CD8-positive, alpha-beta T cell (primary cell): ENCODE measurements at regions of chr12 and their contacts with region 1.

Region 1: DNA sequence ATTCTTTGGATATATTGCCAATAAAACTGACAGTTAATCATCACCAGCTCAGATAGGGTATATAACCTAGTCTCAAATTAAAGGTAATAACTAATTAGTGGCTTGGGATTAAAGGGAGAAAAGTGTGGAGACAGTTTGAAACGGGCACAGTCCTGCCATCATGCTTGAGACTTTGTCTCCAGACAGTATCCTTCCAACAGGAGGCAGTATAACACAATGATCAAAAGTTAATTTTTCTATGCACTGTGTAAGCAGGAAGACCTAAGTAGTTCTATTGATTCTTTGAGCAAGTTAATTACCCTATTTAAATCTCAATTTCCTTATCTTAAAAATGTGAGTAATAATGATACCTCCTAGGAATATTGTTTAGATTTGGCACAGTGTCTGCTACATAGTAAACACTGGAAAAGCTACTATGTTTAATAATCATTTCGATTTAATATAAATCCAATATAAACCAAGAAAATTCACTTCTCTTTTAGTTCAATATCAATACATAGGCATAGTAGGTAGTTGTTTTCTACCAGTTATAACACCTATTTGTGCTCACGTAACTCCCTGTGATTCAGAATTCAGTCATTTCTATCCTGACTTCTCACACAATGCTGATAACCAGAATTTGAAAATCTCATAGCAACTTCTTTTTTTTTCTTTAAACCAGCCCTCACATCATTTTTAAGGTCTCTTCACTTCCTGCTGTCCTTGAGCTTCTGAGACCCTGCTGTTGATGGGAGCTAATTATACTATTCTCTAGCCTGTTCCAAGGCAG is 53.7 kb downstream of the GALNT4 start:
- DNase-seq: peak in 2 of 9 experiments; percentile 62 to 73
- ATAC-seq: peak; percentile 71
- H3K4me3 ChIP-seq: no peak overlapping the region
- H3K4me3 Mint-ChIP-seq: no peak overlapping the region
- H3K27ac ChIP-seq: peak overlapping the region in 1 of 2 experiments; percentile 30
- H3K27ac Mint-ChIP-seq: peak overlapping the region; percentile 67
- H3K4me1 ChIP-seq: peaks cover 30% of the 10 kb centered on the region
- H3K4me1 Mint-ChIP-seq: peaks cover 55% of the 10 kb centered on the region
- H3K27me3 ChIP-seq: no peaks in the 10 kb centered on the region
- H3K27me3 Mint-ChIP-seq: no peaks in the 10 kb centered on the region
- CTCF ChIP-seq: peak; percentile 70

Region 2: DNA sequence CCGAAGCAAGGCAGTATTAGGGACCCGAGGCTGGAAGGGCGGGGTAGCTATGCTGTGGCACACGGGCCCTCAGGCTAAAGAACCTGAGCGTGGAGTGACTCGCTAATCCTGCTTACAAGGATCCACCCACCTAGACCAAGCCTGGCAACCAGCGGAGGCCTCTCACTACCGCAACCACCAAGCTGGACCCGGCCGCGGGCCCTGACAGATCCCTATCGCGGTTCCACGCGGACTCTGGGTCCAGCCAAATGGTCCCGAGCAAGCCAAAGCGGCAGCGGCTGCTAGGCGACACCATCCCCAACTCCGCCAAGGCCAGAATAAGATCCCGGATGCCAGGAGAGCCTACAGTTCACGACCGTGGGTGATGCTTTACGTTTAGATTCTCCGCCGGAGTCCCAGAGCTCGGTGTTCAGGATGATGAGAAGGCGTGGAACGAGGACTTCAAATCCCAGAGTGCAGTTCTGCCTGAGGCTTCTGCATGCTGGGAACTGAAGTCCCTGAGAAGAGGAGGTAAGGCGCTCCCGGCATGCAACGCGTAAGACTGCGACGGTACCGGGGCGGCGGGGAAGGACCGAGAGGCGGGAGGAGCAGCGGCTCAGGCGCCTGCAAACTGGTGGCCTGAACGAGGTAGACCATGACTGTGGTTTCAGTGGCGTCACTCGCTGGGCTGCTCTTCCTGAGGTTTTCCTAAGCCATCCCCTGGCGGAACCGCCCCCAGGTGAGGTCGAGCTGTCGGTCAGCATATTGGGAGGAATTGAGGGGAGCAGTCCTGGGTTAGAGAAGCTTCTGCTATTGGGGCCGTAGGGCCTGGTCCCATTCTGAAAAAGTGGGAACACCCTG is 1328.9 kb before region 1 on chr12 and contains the starts of genes CEP290 and TMTC3:
- CTCF ChIA-PET with region 1: no interaction called
- POLR2A ChIA-PET with region 1: no interaction called
- intact Hi-C with region 1: loop called (anchors 5 to 10 kb)
- DNase-seq: peak; percentile 81 to 99 (median 90)
- ATAC-seq: peak; percentile 92
- H3K4me3 ChIP-seq: peak within 1 kb of the TSS; percentile 82 to 84
- H3K4me3 Mint-ChIP-seq: peak within 1 kb of the TSS; percentile 99
- H3K27ac ChIP-seq: peak within 1 kb of the TSS; percentile 75 to 85
- H3K27ac Mint-ChIP-seq: peak within 1 kb of the TSS; percentile 97
- H3K4me1 ChIP-seq: peaks cover 18% of the 10 kb centered on the region
- H3K4me1 Mint-ChIP-seq: peaks cover 48% of the 10 kb centered on the region
- H3K27me3 ChIP-seq: no peaks in the 10 kb centered on the region
- H3K27me3 Mint-ChIP-seq: no peaks in the 10 kb centered on the region
- CTCF ChIP-seq: no peak
- total RNA-seq, gene CEP290: 7.7 to 10.7 TPM
- total RNA-seq, gene TMTC3: 3.9 to 4.4 TPM

Region 3: DNA sequence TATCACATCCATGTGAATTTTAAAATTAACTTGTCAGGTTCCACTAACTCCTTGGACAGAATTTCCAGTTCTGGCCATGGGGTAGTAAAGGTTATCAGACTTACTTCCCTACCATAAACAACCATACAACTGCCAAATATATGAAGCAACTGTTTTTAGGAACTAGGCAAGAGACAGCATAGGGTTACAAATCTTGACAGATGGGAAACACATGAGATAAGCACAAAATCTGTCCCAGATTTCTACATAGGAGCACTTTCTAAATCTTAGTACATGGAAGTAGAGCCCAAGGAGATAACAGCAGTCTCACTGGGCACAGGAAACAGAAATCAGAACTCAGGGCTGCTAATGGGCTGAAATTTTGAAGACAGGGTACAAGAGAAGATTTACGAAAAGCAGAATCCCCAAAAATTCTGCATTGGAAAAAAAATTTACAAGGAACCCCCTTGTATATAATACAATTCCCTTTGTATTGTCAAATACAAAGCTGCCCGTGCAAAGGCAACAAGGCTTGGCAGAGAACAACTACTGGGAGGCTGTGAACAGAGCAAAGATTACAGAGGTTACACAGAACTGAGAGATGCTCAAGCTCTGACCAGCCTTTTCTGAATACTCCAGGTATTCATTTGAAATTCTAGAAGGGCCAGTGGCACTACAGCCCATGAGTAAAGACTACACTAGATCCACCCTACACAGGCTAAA is 10.4 kb after region 1 on chr12:
- CTCF ChIA-PET with region 1: interaction called, 8 read pairs
- POLR2A ChIA-PET with region 1: interaction called, 3 read pairs
- intact Hi-C with region 1: loop called in 1 of 2 experiments (anchors 2 kb)
- DNase-seq: no peak
- ATAC-seq: no peak
- H3K4me3 ChIP-seq: no peak overlapping the region
- H3K4me3 Mint-ChIP-seq: no peak overlapping the region
- H3K27ac ChIP-seq: no peak overlapping the region
- H3K27ac Mint-ChIP-seq: no peak overlapping the region
- H3K4me1 ChIP-seq: no peaks in the 10 kb centered on the region
- H3K4me1 Mint-ChIP-seq: peaks cover 10% of the 10 kb centered on the region
- H3K27me3 ChIP-seq: no peaks in the 10 kb centered on the region
- H3K27me3 Mint-ChIP-seq: no peaks in the 10 kb centered on the region
- CTCF ChIP-seq: no peak

Region 4: DNA sequence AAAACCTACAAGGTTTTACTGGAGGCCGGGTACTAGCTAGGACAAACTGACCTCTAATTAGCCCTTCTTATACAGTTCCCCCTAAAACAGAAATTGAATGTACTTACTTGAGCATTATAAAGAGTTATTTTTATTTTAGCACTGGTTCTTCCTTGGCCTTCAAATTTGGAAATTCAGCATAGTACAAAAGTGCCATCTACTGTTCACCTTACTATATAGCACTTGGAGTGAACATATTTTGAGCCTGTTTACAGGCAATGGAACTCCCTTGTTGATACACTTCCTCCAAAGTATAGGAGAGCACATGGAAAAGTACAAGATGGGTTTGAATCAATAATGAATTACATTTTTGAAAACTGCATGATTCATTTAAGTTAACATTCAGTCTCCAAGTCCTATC is 58.8 kb after region 1 on chr12:
- CTCF ChIA-PET with region 1: interaction called, 89 read pairs
- POLR2A ChIA-PET with region 1: interaction called, 11 read pairs
- intact Hi-C with region 1: loop called (anchors 1 kb)
- DNase-seq: peak in 2 of 9 experiments; percentile 61 to 70
- ATAC-seq: peak; percentile 33
- H3K4me3 ChIP-seq: no peak overlapping the region
- H3K4me3 Mint-ChIP-seq: no peak overlapping the region
- H3K27ac ChIP-seq: no peak overlapping the region
- H3K27ac Mint-ChIP-seq: no peak overlapping the region
- H3K4me1 ChIP-seq: no peaks in the 10 kb centered on the region
- H3K4me1 Mint-ChIP-seq: peaks cover 21% of the 10 kb centered on the region
- H3K27me3 ChIP-seq: no peaks in the 10 kb centered on the region
- H3K27me3 Mint-ChIP-seq: no peaks in the 10 kb centered on the region
- CTCF ChIP-seq: peak; percentile 73

Region 5: GRCh38 chr12:89862511-89863179 is 391.7 kb after region 1 on chr12:
- CTCF ChIA-PET with region 1: no interaction called
- POLR2A ChIA-PET with region 1: no interaction called
- intact Hi-C with region 1: loop called in 1 of 2 experiments (anchors 5 kb)
- DNase-seq: peak in 7 of 9 experiments; percentile 27 to 82 (median 50)
- ATAC-seq: peak; percentile 30
- H3K4me3 ChIP-seq: peak overlapping the region; percentile 29 to 46
- H3K4me3 Mint-ChIP-seq: peak overlapping the region; percentile 80
- H3K27ac ChIP-seq: peak overlapping the region; percentile 79 to 88
- H3K27ac Mint-ChIP-seq: peak overlapping the region; percentile 93
- H3K4me1 ChIP-seq: peaks cover 36% of the 10 kb centered on the region
- H3K4me1 Mint-ChIP-seq: peaks cover 54% of the 10 kb centered on the region
- H3K27me3 ChIP-seq: no peaks in the 10 kb centered on the region
- H3K27me3 Mint-ChIP-seq: no peaks in the 10 kb centered on the region
- CTCF ChIP-seq: no peak

Region 6: DNA sequence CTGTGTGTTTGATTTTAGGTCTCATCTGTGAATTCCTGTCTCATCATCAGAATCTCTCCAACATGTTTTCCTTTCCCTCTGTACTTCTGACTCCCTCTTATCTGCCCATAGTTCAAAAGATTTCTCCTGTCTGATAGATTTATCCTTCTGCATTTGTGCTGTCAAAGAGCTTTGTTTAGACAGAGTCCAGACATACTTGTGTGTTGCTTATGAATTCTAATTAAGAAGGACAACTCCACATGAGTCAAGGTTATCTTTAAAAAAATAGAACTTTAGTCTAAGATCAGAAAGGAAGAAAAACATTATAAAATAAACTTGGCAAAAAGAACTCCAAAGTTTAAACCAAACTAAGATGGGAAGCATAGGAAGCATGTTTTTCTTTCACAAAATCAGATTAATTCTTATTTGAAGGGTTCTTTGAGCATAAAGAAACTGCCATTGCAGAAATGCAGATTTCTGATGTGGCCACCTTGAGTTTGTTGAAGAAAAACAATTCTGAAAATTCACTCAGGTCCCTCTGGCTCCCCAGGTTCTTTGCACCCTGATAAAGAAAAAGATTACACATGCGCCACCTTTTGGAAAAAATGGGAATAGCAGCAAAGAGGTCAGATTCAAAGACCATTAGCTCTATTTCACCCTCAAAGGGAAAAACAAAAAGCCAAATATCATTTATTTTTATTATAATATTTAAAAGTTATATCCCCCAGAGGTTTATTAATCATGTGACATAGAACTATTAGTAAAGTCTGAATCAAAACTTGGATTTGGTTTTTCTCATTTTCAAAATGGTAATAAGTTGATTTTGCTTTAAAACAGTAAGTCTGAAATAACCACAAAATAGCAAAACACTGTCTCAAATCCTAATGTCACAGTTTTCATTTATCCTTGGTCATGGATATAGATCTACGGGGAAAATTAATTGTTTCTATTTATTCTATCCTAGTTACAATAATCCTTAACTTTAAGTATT is 1855.4 kb after region 1 on chr12:
- CTCF ChIA-PET with region 1: no interaction called
- POLR2A ChIA-PET with region 1: no interaction called
- intact Hi-C with region 1: loop called in 1 of 2 experiments (anchors 5 kb)
- DNase-seq: peak in 7 of 9 experiments; percentile 0 to 53 (median 21)
- ATAC-seq: no peak
- H3K4me3 ChIP-seq: no peak overlapping the region
- H3K4me3 Mint-ChIP-seq: no peak overlapping the region
- H3K27ac ChIP-seq: no peak overlapping the region
- H3K27ac Mint-ChIP-seq: no peak overlapping the region
- H3K4me1 ChIP-seq: no peaks in the 10 kb centered on the region
- H3K4me1 Mint-ChIP-seq: no peaks in the 10 kb centered on the region
- H3K27me3 ChIP-seq: no peaks in the 10 kb centered on the region
- H3K27me3 Mint-ChIP-seq: peaks cover 6% of the 10 kb centered on the region
- CTCF ChIP-seq: peak; percentile 89